ENCODE measurements at regions of chr7 and their contacts with region 1.

Region 1: GRCh38 chr7:157784979-157785441 is 448.2 kb downstream of the DNAJB6 start:
- DNase-seq: no peak

Region 2: GRCh38 chr7:156792611-156793010 is 992.4 kb before region 1 on chr7:
- intact Hi-C with region 1: no loop called
- DNase-seq: no peak

Region 3: DNA sequence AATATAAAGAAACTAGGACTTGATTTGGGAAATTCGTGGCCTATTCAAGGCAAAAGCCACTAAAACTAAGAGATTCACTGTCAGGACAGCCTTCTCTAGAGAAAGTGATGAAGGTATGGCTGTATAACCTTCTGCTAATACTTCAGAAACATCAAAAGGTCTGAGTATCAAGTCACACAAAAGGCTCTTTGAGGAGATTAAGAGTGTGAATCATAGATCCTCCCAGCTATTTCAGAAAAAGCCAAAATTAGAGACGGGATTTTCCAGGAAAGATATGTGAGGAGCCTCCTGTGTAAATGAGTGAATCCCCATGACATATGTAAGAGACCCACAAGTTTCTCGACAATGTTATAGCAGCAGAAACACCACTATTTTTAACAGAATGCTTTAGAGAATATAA is 590.1 kb before region 1 on chr7:
- intact Hi-C with region 1: loop called in 1 of 2 experiments (anchors 5 kb)
- DNase-seq: no peak